CD8-positive, alpha-beta T cell (primary cell): ENCODE measurements at regions of chr10 and their contacts with region 1.

Region 1: GRCh38 chr10:13440185-13441061 is 88.4 kb downstream of the BEND7 start:
- DNase-seq: peak; percentile 29 to 79 (median 67)
- ATAC-seq: peak; percentile 95
- H3K4me3 ChIP-seq: peak overlapping the region; percentile 31 to 41
- H3K4me3 Mint-ChIP-seq: peak overlapping the region; percentile 74
- H3K27ac ChIP-seq: no peak overlapping the region
- H3K27ac Mint-ChIP-seq: no peak overlapping the region
- H3K4me1 ChIP-seq: peaks cover 11% of the 10 kb centered on the region
- H3K4me1 Mint-ChIP-seq: peaks cover 11% of the 10 kb centered on the region
- H3K27me3 ChIP-seq: peaks cover 11 to 18% of the 10 kb centered on the region in 2 experiments
- H3K27me3 Mint-ChIP-seq: peaks cover 50% of the 10 kb centered on the region
- CTCF ChIP-seq: peak; percentile 90

Region 2: DNA sequence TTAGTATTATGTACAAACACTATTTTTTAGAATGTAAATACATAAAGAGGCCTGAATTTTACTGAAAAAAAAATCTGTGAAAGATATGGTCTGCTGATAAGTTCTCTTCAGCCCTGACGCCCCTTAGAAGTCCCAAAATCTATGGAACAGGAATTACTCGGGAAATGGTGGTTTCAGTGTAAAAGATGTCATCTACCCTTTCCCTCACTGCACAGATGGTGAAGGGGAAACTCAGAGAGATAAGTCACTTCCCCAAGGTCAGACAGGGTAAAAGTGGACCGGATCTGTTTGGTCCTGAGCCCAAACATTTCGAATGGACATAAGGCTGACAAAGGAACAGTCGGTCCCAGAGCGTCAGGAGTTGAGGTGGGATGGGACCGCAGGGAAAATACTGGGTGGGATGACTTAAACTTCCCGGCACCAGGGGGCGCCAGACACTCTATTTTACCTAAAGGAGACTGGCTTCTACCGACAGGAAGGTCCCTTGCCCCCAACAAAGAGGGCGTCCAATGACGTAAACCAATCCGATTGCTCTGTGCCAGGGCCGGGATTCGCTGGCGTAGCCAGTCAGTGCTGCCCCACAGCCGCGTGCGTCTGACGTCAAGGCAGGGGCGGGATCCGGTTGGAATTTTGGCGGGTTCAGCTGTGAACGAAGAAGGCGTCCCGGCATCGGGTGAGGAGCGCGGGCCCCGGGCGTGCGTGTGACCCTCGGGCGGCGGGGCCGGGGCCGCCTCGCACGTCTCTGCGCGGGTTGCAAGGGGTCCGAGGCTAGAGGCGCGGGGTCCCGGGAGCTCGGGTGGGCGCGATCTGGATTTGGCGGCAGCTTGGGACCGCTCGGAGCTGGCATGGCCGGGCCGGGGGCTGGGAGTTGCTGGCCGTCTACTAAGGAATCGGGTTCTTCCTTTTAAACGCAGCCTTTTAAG is 279.2 kb before region 1 on chr10 and contains the start of gene MCM10:
- CTCF ChIA-PET with region 1: interaction called, 15 read pairs
- POLR2A ChIA-PET with region 1: no interaction called
- intact Hi-C with region 1: loop called in 1 of 2 experiments (anchors 1 kb)
- DNase-seq: peak; percentile 93 to 99 (median 98)
- ATAC-seq: peak; percentile 100
- H3K4me3 ChIP-seq: peak within 1 kb of the TSS; percentile 44 to 49
- H3K4me3 Mint-ChIP-seq: peak within 1 kb of the TSS; percentile 88
- H3K27ac ChIP-seq: peak within 1 kb of the TSS in 1 of 2 experiments; percentile 40
- H3K27ac Mint-ChIP-seq: peak within 1 kb of the TSS; percentile 86
- H3K4me1 ChIP-seq: peaks cover 10% of the 10 kb centered on the region
- H3K4me1 Mint-ChIP-seq: peaks cover 14% of the 10 kb centered on the region
- H3K27me3 ChIP-seq: no peaks in the 10 kb centered on the region
- H3K27me3 Mint-ChIP-seq: no peaks in the 10 kb centered on the region
- CTCF ChIP-seq: peak; percentile 96
- total RNA-seq, gene MCM10: 0.08 to 0.19 TPM

Region 3: DNA sequence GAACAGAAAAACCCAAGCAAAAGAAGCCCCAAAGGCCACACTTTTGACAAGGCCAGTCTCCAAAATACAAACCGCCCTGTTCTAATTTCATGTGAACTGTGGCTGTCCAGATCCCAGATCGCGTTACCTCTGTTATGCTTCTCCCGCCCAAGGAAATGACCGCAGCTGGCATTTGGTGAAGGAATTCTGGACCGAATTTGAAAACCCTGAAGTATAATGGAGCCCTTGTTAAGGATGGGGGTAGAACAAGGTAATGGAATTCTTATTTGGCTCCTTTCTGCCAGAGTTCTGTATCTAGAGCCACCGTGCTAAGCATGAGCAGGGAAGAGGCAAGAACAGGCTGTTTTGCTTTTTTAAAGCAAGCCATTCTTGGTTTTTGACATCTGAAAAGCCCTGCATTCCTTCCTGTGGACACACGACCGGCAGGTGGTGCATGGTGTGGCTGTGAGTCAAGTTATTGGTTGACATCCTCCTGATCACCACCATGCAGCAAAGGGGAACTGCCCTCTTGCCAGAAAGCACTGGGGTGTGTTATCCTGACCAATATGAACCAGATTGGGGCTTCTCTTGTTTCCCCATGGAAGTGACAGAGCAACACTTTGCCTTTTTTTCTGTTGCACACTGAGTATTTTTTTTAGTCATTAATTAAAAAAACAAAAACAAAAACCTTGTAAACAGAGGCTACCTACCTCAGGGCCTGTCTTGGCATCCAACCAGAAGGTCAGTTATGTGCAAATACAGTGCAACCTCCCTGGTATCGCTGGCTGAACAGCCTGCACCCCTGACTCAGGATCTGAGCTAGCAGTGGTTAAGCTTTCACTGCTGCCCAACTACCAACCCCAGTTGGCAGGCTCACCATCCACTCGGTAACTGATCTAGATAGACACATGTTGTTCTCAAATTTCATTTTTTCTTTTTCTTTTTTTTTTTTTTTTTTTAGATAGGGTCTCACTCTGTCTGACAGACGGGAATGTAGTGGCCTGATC is 220.4 kb before region 1 on chr10:
- CTCF ChIA-PET with region 1: no interaction called
- POLR2A ChIA-PET with region 1: no interaction called
- intact Hi-C with region 1: no loop called
- DNase-seq: peak in 1 of 9 experiments; percentile 7
- ATAC-seq: no peak
- H3K4me3 ChIP-seq: no peak overlapping the region
- H3K4me3 Mint-ChIP-seq: no peak overlapping the region
- H3K27ac ChIP-seq: no peak overlapping the region
- H3K27ac Mint-ChIP-seq: no peak overlapping the region
- H3K4me1 ChIP-seq: no peaks in the 10 kb centered on the region
- H3K4me1 Mint-ChIP-seq: no peaks in the 10 kb centered on the region
- H3K27me3 ChIP-seq: no peaks in the 10 kb centered on the region
- H3K27me3 Mint-ChIP-seq: no peaks in the 10 kb centered on the region
- CTCF ChIP-seq: no peak

Region 4: DNA sequence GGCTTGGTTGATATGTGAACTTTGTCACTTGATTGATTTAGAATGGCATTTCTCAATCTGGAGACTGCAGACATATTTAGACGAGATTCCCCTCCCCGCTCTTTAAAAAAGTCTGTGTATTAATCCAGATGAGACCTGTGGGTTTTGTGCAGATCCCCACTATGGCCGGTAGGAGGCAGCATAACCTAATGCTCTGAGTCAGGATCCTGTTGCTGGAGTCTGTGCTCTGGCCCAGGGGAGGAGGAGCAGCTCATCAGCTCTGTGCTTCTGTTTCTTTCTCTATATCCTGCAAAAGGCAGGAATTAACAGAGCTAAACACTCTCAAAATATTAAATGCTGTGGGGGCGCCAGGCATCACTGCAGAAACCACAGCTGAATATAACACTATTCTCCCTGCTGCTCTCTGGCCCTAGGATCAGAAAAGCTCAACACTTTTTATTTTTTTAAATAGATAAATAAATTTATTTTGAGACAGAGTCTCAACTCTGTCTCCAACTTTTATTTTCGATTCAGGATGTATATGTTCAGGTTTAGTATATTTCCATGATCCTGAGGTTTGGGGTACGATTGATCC is 68.4 kb before region 1 on chr10:
- CTCF ChIA-PET with region 1: interaction called, 42 read pairs
- POLR2A ChIA-PET with region 1: interaction called, 4 read pairs
- intact Hi-C with region 1: loop called in 1 of 2 experiments (anchors 1 kb)
- DNase-seq: peak; percentile 6 to 85 (median 65)
- ATAC-seq: peak; percentile 100
- H3K4me3 ChIP-seq: no peak overlapping the region
- H3K4me3 Mint-ChIP-seq: no peak overlapping the region
- H3K27ac ChIP-seq: no peak overlapping the region
- H3K27ac Mint-ChIP-seq: no peak overlapping the region
- H3K4me1 ChIP-seq: no peaks in the 10 kb centered on the region
- H3K4me1 Mint-ChIP-seq: peaks cover 4% of the 10 kb centered on the region
- H3K27me3 ChIP-seq: no peaks in the 10 kb centered on the region
- H3K27me3 Mint-ChIP-seq: peaks cover 7% of the 10 kb centered on the region
- CTCF ChIP-seq: peak; percentile 93

Region 5: DNA sequence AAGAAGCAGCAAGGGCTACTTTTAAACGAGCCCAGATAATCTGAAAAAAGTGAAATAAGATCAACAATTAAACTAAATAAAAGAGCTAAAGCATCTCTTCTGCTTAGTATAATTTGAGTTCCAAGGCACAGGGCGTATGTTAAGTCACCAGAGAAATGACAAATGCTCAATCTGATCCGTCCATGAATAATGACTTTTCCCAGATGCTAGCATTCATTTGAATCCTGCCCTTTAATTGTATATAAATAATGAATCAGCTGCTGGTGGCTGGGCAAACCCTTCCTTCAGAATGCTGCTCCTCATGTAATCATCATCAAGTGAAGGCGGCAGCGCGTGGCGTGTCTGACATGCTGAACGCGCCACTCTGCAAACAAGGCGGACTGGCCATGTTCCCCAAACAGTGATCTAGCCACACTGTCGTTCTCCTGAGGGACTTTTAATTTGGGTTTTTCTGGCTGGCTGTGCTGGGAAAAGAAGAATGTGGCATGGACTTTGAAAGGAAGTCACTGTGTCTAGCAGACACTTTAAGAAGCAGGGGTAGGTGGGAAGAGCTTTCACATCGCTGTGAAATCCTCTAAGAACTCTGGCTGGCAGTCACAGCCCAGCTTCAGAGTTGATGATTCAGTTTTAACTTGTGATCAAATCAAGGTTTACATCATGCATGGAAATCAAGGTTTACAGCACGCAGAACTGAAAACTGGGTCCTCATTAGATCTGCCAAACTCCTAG is 17.7 kb after region 1 on chr10:
- CTCF ChIA-PET with region 1: interaction called, 10 read pairs
- POLR2A ChIA-PET with region 1: no interaction called
- intact Hi-C with region 1: no loop called
- DNase-seq: no peak
- ATAC-seq: no peak
- H3K4me3 ChIP-seq: no peak overlapping the region
- H3K4me3 Mint-ChIP-seq: no peak overlapping the region
- H3K27ac ChIP-seq: no peak overlapping the region
- H3K27ac Mint-ChIP-seq: no peak overlapping the region
- H3K4me1 ChIP-seq: no peaks in the 10 kb centered on the region
- H3K4me1 Mint-ChIP-seq: peaks cover 6% of the 10 kb centered on the region
- H3K27me3 ChIP-seq: no peaks in the 10 kb centered on the region
- H3K27me3 Mint-ChIP-seq: peaks cover 28% of the 10 kb centered on the region
- CTCF ChIP-seq: no peak

Region 6: DNA sequence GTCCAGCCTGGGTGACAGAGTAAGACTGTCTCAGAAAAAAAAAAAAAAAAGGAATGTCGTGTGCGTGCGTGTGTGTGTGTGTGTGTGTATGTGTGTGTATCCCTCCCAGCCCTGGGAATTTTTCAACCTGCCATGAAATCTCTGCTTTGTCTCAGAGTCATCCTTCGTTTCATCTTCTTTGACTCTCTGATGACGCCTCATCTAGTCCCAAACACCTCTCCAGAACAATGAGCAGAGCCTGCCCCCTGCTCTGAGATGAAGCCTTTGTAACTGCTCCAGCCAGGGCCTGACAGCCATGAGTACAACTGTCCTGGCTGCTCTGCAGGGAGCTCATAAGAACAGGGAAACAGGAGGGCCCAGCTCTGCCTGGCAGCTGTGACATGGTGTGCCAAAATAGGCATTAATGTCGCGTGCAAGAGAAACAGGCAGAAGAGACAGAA is 1184.8 kb after region 1 on chr10:
- CTCF ChIA-PET with region 1: no interaction called
- POLR2A ChIA-PET with region 1: no interaction called
- intact Hi-C with region 1: no loop called
- DNase-seq: no peak
- ATAC-seq: no peak
- H3K4me3 ChIP-seq: no peak overlapping the region
- H3K4me3 Mint-ChIP-seq: no peak overlapping the region
- H3K27ac ChIP-seq: no peak overlapping the region
- H3K27ac Mint-ChIP-seq: no peak overlapping the region
- H3K4me1 ChIP-seq: peaks cover 3% of the 10 kb centered on the region
- H3K4me1 Mint-ChIP-seq: peaks cover 4% of the 10 kb centered on the region
- H3K27me3 ChIP-seq: no peaks in the 10 kb centered on the region
- H3K27me3 Mint-ChIP-seq: no peaks in the 10 kb centered on the region
- CTCF ChIP-seq: no peak